ENCODE measurements at regions of chr5 and their contacts with region 1.

Region 1: DNA sequence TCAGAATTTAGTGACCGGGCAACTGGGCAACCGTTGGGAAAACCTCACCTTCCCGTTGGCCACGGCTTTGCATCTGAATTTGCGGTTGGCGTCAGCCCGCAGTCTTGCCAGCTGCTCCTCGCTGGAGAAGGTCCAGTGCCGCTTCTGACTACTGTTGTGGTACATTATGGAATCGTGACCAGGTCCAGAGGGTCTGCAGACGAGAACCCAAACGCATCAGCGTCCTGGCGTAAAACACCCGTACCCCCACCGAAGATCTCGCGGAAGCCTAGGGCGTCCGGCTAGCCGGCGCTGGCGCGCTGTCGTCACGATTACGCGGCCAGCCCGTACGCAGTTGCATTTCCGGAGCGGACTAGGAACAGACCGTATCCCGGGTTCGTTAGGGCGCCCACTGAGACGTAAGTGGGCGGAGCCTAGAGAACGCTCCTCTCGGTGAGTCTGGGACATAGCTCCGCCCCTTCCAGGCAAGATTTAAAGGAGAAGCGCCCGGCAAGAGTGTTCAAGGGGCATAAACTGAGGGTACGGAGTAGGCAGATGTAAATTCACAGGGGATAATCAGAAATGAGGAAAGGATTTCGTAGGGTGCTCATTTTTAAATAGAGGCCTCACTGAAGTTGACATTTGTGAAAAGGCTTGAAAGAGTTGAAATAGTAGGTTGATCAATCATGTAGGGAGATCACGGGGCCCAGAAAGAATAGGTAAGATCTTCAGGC is at the start of gene CCNH:
- DNase-seq: peak; percentile 99
- H3K4me3 ChIP-seq: peak within 1 kb of the TSS; percentile 62 to 92 (median 74)
- H3K27ac ChIP-seq: peak within 1 kb of the TSS; percentile 94 to 99 (median 96)
- H3K4me1 ChIP-seq: peaks cover 0 to 31% (median 15%) of the 10 kb centered on the region in 4 donors
- H3K27me3 ChIP-seq: no peaks in the 10 kb centered on the region
- CTCF ChIP-seq: no peak
- EP300 ChIP-seq: peak; percentile 96
- POLR2A ChIP-seq: peak; percentile 97
- total RNA-seq, gene CCNH: 23.9 to 163 (median 68.3) TPM

Region 2: DNA sequence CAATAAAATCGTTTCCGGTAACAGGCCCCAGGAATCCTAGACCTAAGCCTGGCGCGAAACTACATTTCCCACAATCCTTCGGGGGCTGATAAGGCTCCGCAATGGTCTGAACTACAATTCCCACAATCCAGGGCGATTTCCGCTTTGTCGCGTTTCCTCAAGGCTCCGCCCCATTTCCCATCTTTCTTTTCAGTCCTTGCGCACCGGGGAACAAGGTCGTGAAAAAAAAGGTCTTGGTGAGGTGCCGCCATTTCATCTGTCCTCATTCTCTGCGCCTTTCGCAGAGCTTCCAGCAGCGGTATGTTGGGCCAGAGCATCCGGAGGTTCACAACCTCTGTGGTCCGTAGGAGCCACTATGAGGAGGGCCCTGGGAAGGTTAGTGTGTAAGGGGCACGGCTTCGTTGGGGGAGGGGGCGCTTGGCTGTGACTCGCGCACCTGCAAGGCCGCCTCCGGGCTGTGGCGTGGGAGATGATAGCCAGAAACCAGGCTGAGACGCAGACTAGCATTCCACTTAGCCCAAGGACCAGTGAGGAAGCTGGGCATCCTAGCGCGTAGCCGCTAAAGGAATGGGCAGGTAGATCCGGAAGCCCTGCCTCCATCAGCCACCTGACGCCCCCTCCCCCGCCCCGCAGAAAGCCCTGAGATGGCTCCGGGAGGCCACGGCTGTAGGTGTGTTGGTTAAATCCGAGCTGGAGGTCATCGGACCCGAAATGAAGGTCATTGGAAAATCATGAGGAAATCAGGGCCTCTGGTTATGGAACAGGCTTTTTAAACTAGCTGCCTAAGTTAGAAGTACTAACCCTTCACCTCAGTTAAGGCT is 794.8 kb before region 1 on chr5 and contains the start of gene COX7C:
- in situ Hi-C with region 1: loop called in 1 of 4 experiments (anchors 25 kb)
- intact Hi-C with region 1: no loop called
- DNase-seq: peak; percentile 95
- H3K4me3 ChIP-seq: peak within 1 kb of the TSS; percentile 64 to 97 (median 73)
- H3K27ac ChIP-seq: peak within 1 kb of the TSS; percentile 88 to 95 (median 90)
- H3K4me1 ChIP-seq: peaks cover 0 to 14% (median 11%) of the 10 kb centered on the region in 4 donors
- H3K27me3 ChIP-seq: peaks cover 8% of the 10 kb centered on the region
- CTCF ChIP-seq: no peak
- EP300 ChIP-seq: no peak
- POLR2A ChIP-seq: peak; percentile 94
- total RNA-seq, gene COX7C: 329 to 677 (median 411) TPM

Region 3: DNA sequence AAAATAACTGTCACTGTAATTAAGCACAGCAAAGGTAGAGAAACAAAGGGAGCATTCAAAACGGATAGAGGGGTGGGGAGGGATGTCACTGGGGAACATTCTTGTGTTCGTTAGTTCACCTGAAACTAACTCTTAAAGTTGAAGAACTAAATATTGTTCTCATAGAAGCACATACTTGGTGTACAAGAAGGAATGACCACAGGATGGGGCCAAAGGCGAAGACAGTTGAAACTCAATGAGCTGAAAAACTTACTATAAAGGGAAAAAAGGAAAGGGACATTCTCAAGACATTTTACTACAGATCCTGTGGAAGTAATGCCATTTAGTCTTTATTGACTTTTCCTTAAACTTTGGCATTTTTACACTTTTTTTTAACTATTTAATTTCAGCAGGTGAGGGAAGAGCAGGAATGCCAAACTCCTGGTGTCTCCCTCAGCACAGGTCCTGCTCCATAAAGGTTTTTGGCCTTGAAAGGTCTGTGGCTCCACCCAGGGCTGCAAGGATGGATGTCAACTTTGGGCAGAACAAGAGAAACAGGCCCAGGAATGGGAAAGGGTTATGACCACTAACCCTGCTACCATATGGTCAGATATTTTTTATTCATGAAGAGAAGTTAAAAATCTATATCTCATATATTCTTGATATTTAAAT is 342.7 kb before region 1 on chr5:
- in situ Hi-C with region 1: loop called in 1 of 4 experiments (anchors 25 kb)
- intact Hi-C with region 1: no loop called
- DNase-seq: peak; percentile 49
- H3K4me3 ChIP-seq: no peak overlapping the region
- H3K27ac ChIP-seq: no peak overlapping the region
- H3K4me1 ChIP-seq: peaks cover 0 to 7% (median 3%) of the 10 kb centered on the region in 4 donors
- H3K27me3 ChIP-seq: no peaks in the 10 kb centered on the region
- CTCF ChIP-seq: peak in 4 of 5 experiments; percentile 32 to 44 (median 36)
- EP300 ChIP-seq: no peak
- POLR2A ChIP-seq: no peak

Region 4: GRCh38 chr5:87872986-87873385 is 460.2 kb after region 1 on chr5:
- in situ Hi-C with region 1: no loop called
- intact Hi-C with region 1: no loop called
- DNase-seq: no peak
- H3K4me3 ChIP-seq: no peak overlapping the region
- H3K27ac ChIP-seq: no peak overlapping the region
- H3K4me1 ChIP-seq: no peaks in the 10 kb centered on the region
- H3K27me3 ChIP-seq: no peaks in the 10 kb centered on the region
- CTCF ChIP-seq: no peak
- EP300 ChIP-seq: no peak
- POLR2A ChIP-seq: no peak

Region 5: DNA sequence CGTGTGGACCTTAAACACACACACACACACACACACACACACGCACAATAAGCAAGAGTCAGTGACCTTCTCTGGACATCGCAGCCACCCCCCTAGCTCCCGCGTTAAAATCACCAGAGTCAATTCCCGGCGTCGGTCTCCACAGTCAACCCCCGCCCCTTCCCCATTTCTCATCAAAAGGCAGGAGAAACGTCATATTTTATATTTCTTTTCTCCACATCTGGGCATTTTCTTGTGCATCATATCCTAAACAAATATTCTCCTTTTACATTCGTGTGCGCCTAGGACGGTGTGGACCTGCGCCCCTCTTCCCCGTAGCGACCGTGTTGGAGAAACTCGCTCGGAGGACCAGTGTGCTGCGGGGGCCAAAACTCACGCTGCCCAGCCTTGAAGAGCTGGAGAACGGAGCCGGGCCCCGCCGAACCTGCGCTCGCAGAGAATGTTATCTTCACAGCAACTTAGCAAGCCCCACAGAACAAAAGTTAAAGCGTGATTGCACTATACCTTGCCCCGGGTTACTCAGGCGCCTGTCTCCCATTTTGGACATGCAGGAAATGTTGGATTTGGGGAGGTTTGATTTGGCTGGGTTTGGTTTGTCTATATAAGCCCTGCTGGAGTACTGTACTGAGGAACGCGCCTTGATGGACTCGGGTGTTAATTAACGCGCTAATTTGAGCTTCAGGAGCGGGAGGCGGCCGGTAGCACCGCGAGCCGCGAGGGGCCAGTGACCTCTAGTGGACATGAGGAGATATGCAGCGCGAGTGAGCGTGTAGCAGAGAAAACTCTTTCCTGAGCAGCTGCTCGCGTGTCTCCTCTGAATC is 1277.8 kb after region 1 on chr5:
- in situ Hi-C with region 1: loop called in 1 of 4 experiments (anchors 25 kb)
- intact Hi-C with region 1: no loop called
- DNase-seq: peak; percentile 70
- H3K4me3 ChIP-seq: peak overlapping the region in 1 of 4 donors; percentile 28
- H3K27ac ChIP-seq: no peak overlapping the region
- H3K4me1 ChIP-seq: peaks cover 14 to 32% (median 19%) of the 10 kb centered on the region in 4 donors
- H3K27me3 ChIP-seq: peaks cover 100% of the 10 kb centered on the region
- CTCF ChIP-seq: peak; percentile 80 to 98 (median 94)
- EP300 ChIP-seq: no peak
- POLR2A ChIP-seq: no peak